ENCODE measurements at regions of chr2 and their contacts with region 1.

Region 1: GRCh38 chr2:221573430-221574230 is 1.5 kb upstream of the EPHA4 start:
- DNase-seq: peak; percentile 67
- ATAC-seq: peak; percentile 71
- H3K4me3 ChIP-seq: peak overlapping the region; percentile 91
- H3K27ac ChIP-seq: peak overlapping the region; percentile 85
- H3K4me1 ChIP-seq: peaks cover 3% of the 10 kb centered on the region
- H3K27me3 ChIP-seq: no peaks in the 10 kb centered on the region
- CTCF ChIP-seq: peak; percentile 95
- POLR2A ChIP-seq: no peak
- RAD21 ChIP-seq: peak; percentile 96

Region 2: GRCh38 chr2:219726916-219727315 is 1846.7 kb before region 1 on chr2:
- CTCF ChIA-PET with region 1: no interaction called
- POLR2A ChIA-PET with region 1: no interaction called
- dilution Hi-C with region 1: no loop called
- in situ Hi-C with region 1: loop called (anchors 5 kb)
- intact Hi-C with region 1: no loop called
- DNase-seq: no peak
- ATAC-seq: no peak
- H3K4me3 ChIP-seq: no peak overlapping the region
- H3K27ac ChIP-seq: no peak overlapping the region
- H3K4me1 ChIP-seq: no peaks in the 10 kb centered on the region
- H3K27me3 ChIP-seq: no peaks in the 10 kb centered on the region
- CTCF ChIP-seq: no peak
- POLR2A ChIP-seq: no peak
- RAD21 ChIP-seq: no peak

Region 3: GRCh38 chr2:220228299-220229006 is 1345.2 kb before region 1 on chr2:
- CTCF ChIA-PET with region 1: no interaction called
- POLR2A ChIA-PET with region 1: no interaction called
- dilution Hi-C with region 1: no loop called
- in situ Hi-C with region 1: no loop called
- intact Hi-C with region 1: loop called (anchors 2 kb)
- DNase-seq: peak; percentile 99
- ATAC-seq: peak; percentile 81
- H3K4me3 ChIP-seq: no peak overlapping the region; the same call in 1 of the 2 replicates
- H3K27ac ChIP-seq: peak overlapping the region; percentile 89
- H3K4me1 ChIP-seq: peaks cover 18% of the 10 kb centered on the region
- H3K27me3 ChIP-seq: no peaks in the 10 kb centered on the region
- CTCF ChIP-seq: no peak
- POLR2A ChIP-seq: no peak
- RAD21 ChIP-seq: 0 out of 2 replicates have a peak, but pooled peaks have one; percentile 10

Region 4: DNA sequence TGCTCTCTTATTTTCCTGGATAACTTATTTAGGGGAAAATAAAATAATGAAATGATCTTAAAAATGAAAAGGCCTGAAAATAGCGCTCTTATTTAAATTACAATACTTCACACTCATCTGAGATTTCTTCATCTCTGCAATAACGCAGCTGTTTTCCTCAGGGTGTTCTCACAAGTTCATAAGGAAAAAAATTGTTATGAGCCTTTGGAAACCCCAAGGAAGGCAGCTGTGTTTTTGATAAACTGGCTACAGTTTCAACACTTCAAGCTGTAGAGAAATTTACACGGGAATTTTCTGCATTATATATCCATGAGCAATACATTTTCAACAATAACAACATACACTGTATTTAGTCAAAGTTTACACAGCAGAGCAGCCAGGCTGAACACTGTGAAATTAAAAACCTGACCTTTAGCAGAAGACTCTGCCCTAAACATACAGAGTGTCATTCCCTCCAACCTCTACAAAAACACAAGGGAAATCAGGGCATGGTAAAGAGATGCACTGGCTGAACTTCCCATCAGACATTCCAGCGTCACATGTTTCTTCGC is 986.6 kb before region 1 on chr2:
- CTCF ChIA-PET with region 1: no interaction called
- POLR2A ChIA-PET with region 1: no interaction called
- dilution Hi-C with region 1: no loop called
- in situ Hi-C with region 1: no loop called
- intact Hi-C with region 1: loop called (anchors 5 kb)
- DNase-seq: peak; percentile 79
- ATAC-seq: peak; percentile 92
- H3K4me3 ChIP-seq: no peak overlapping the region
- H3K27ac ChIP-seq: peak overlapping the region; percentile 86; the same call in 1 of the 2 replicates
- H3K4me1 ChIP-seq: peaks cover 8% of the 10 kb centered on the region
- H3K27me3 ChIP-seq: no peaks in the 10 kb centered on the region
- CTCF ChIP-seq: no peak
- POLR2A ChIP-seq: no peak
- RAD21 ChIP-seq: no peak

Region 5: GRCh38 chr2:220847551-220848005 is 726.1 kb before region 1 on chr2:
- CTCF ChIA-PET with region 1: interaction called, 3 read pairs
- POLR2A ChIA-PET with region 1: no interaction called
- dilution Hi-C with region 1: no loop called
- in situ Hi-C with region 1: no loop called
- intact Hi-C with region 1: loop called (anchors 5 kb)
- DNase-seq: peak; percentile 93
- ATAC-seq: peak; percentile 97
- H3K4me3 ChIP-seq: no peak overlapping the region
- H3K27ac ChIP-seq: no peak overlapping the region
- H3K4me1 ChIP-seq: 0 out of 2 replicates have a peak, but pooled peaks cover 2% of the 10 kb centered on the region
- H3K27me3 ChIP-seq: no peaks in the 10 kb centered on the region
- CTCF ChIP-seq: no peak
- POLR2A ChIP-seq: no peak
- RAD21 ChIP-seq: no peak

Region 6: GRCh38 chr2:221075203-221075602 is 498.4 kb before region 1 on chr2:
- CTCF ChIA-PET with region 1: no interaction called
- POLR2A ChIA-PET with region 1: no interaction called
- dilution Hi-C with region 1: no loop called
- in situ Hi-C with region 1: no loop called
- intact Hi-C with region 1: loop called (anchors 10 kb)
- DNase-seq: peak; percentile 92
- ATAC-seq: peak; percentile 87
- H3K4me3 ChIP-seq: no peak overlapping the region
- H3K27ac ChIP-seq: peak overlapping the region; percentile 69; the same call in 1 of the 2 replicates
- H3K4me1 ChIP-seq: peaks cover 6% of the 10 kb centered on the region; the same call in 1 of the 2 replicates
- H3K27me3 ChIP-seq: no peaks in the 10 kb centered on the region
- CTCF ChIP-seq: no peak
- POLR2A ChIP-seq: no peak
- RAD21 ChIP-seq: no peak

Region 7: DNA sequence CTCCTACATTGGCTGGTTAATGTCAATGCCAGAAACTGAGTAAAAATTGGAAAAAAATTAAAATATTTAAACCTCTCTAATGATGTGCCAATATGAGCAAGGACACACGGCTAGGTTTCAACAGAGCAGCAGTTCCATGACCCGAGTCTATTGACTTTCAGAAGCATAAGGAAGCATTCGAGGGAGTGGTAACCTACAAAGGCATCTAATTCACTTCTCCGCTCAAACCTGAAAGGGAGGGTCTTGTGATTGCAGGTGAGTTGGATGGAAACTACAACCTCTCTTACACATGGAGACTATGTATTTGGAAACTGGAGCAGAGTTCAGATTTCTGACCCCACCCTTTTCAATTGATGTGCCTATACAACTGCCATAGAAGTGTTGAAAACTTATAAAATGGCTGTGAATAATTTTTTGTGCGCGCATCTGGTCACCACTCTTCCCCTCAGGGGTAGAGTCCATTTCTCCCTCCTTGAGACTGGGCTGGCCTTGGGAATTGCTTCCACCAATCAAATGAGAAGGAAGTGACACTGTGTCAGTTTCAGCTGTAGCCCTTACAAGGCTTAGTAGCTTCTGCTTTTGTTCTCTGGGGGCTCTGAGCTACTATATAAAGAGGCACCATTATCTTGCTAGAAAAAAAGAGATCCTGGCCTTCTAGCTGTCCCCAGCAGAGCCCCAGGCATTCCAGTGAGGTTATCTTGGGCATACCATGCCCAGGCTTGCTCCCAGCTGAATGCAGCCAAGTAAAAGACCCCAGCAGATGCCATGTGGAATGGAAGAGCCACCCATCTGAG is 279.5 kb before region 1 on chr2:
- CTCF ChIA-PET with region 1: no interaction called
- POLR2A ChIA-PET with region 1: no interaction called
- dilution Hi-C with region 1: no loop called
- in situ Hi-C with region 1: no loop called
- intact Hi-C with region 1: no loop called
- DNase-seq: no peak
- ATAC-seq: no peak
- H3K4me3 ChIP-seq: no peak overlapping the region
- H3K27ac ChIP-seq: no peak overlapping the region
- H3K4me1 ChIP-seq: no peaks in the 10 kb centered on the region
- H3K27me3 ChIP-seq: peaks cover 2% of the 10 kb centered on the region; the same call in 1 of the 2 replicates
- CTCF ChIP-seq: no peak
- POLR2A ChIP-seq: no peak
- RAD21 ChIP-seq: no peak

Region 8: DNA sequence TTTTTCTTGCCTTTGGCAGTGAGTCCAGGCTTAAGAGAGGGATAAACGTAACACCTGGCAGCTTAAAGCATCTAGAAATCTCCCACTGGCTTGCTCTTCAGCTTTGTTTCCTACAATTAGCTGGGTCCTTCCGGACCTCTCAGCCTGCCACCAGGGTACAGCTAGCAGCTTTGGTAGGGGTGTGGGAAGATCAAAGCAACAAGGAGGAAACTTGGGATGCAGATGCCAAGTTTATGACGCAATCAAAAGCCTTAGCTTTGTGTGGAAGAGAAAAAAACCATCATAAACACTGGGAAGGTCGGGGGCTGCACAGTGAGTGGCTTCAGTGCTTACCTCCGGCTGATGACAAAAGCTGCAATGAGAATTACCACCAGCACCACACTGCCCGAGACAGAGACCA is 118.4 kb before region 1 on chr2:
- CTCF ChIA-PET with region 1: no interaction called
- POLR2A ChIA-PET with region 1: no interaction called
- dilution Hi-C with region 1: no loop called
- in situ Hi-C with region 1: no loop called
- intact Hi-C with region 1: loop called (anchors 5 kb)
- DNase-seq: peak; percentile 14
- ATAC-seq: no peak
- H3K4me3 ChIP-seq: no peak overlapping the region
- H3K27ac ChIP-seq: no peak overlapping the region
- H3K4me1 ChIP-seq: peaks cover 3% of the 10 kb centered on the region; the same call in 1 of the 2 replicates
- H3K27me3 ChIP-seq: no peaks in the 10 kb centered on the region
- CTCF ChIP-seq: no peak
- POLR2A ChIP-seq: no peak
- RAD21 ChIP-seq: no peak

Region 9: GRCh38 chr2:221546505-221547225 is 27.0 kb before region 1 on chr2:
- CTCF ChIA-PET with region 1: no interaction called
- POLR2A ChIA-PET with region 1: no interaction called
- dilution Hi-C with region 1: no loop called
- in situ Hi-C with region 1: no loop called
- intact Hi-C with region 1: no loop called
- DNase-seq: no peak
- ATAC-seq: no peak
- H3K4me3 ChIP-seq: no peak overlapping the region
- H3K27ac ChIP-seq: no peak overlapping the region
- H3K4me1 ChIP-seq: no peaks in the 10 kb centered on the region
- H3K27me3 ChIP-seq: no peaks in the 10 kb centered on the region
- CTCF ChIP-seq: no peak
- POLR2A ChIP-seq: no peak
- RAD21 ChIP-seq: no peak

Measured in IMR-90 (cell line).